Endothelial cell of umbilical vein (primary cell): ENCODE measurements at regions of chr5 and their contacts with region 1.

Region 1: DNA sequence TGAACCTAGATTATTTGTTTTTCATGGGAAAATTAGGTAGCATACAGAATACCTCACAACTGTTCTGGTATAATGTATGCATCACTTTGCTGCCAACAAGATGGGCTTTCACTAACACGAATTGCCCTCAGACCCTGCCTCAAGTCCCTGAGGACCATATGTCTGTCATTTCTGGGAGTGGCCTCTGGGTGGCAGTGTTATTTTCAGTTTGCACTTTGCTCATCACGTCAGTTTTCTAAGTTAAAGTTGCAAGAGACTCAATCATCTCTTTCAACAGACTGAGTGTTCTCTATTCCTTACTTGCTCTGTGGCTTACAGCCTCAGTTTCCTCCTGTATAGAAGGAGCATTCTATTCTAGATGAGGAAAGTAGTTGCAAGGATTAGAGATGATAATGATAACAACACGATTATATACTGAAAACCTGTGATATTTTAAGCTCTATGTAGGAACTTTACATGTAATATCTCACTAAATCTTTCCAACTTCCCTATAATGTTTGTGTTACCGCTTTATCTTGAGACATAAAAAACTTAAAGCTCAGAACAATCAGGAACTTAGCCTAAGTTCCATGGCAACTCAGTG is 55.7 kb downstream of the TSSK1B start:
- DNase-seq: peak; percentile 84
- H3K4me3 ChIP-seq: no peak overlapping the region
- H3K27ac ChIP-seq: no peak overlapping the region
- H3K4me1 ChIP-seq: peaks cover 28% of the 10 kb centered on the region
- H3K27me3 ChIP-seq: no peaks in the 10 kb centered on the region
- CTCF ChIP-seq: peak; percentile 67 to 76
- POLR2A ChIP-seq: no peak

Region 2: GRCh38 chr5:113336975-113337374 is 42.1 kb before region 1 on chr5:
- CTCF ChIA-PET with region 1: interaction called, 30 read pairs
- POLR2A ChIA-PET with region 1: interaction called, 5 read pairs
- dilution Hi-C with region 1: no loop called
- intact Hi-C with region 1: loop called (anchors 1 kb)
- DNase-seq: peak; percentile 78
- H3K4me3 ChIP-seq: no peak overlapping the region
- H3K27ac ChIP-seq: no peak overlapping the region
- H3K4me1 ChIP-seq: peaks cover 8% of the 10 kb centered on the region
- H3K27me3 ChIP-seq: no peaks in the 10 kb centered on the region
- CTCF ChIP-seq: peak; percentile 51 to 59
- POLR2A ChIP-seq: no peak

Region 3: DNA sequence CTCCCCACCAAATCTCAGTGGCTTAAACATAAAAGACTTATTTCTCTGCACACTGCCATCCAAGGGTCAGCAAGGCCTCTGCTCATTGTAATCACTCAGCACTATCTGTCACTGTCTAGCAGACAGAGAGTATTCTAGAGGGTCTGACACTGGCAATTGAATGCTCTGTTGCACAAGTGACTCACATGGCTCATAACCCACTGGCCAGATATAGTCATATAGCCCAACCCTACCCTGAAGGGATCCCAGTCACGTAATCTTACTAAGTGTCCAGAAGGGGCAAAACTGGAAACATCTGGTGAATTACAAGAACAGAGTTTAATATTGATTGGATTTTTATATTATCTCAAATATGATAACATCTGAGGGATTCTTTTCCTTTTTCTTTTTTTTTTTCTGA is 25.0 kb before region 1 on chr5:
- CTCF ChIA-PET with region 1: no interaction called
- POLR2A ChIA-PET with region 1: no interaction called
- dilution Hi-C with region 1: no loop called
- intact Hi-C with region 1: no loop called
- DNase-seq: no peak
- H3K4me3 ChIP-seq: no peak overlapping the region
- H3K27ac ChIP-seq: no peak overlapping the region
- H3K4me1 ChIP-seq: peaks cover 7% of the 10 kb centered on the region
- H3K27me3 ChIP-seq: no peaks in the 10 kb centered on the region
- CTCF ChIP-seq: no peak
- POLR2A ChIP-seq: no peak

Region 4: DNA sequence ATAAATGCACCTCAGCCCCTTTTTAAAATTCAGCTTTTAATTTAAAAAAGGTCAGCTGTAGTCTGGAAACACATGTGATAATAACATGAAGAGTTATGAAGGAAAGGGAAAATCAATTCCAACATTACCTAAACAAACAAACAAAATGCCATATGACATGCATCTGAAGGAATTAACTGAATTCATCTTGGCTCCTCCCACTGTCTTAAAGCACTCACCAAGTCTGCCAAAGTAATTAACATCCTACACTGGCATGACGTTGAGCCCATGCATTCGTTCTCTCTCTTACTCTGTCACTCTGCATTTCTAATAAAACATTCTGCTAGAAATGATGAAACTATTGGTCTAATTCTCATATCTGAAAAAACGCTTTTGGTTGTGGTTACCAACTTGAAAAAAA is 18.0 kb after region 1 on chr5:
- CTCF ChIA-PET with region 1: interaction called, 10 read pairs
- POLR2A ChIA-PET with region 1: no interaction called
- dilution Hi-C with region 1: no loop called
- intact Hi-C with region 1: no loop called
- DNase-seq: no peak
- H3K4me3 ChIP-seq: no peak overlapping the region
- H3K27ac ChIP-seq: no peak overlapping the region
- H3K4me1 ChIP-seq: no peaks in the 10 kb centered on the region
- H3K27me3 ChIP-seq: no peaks in the 10 kb centered on the region
- CTCF ChIP-seq: no peak
- POLR2A ChIP-seq: no peak

Region 5: DNA sequence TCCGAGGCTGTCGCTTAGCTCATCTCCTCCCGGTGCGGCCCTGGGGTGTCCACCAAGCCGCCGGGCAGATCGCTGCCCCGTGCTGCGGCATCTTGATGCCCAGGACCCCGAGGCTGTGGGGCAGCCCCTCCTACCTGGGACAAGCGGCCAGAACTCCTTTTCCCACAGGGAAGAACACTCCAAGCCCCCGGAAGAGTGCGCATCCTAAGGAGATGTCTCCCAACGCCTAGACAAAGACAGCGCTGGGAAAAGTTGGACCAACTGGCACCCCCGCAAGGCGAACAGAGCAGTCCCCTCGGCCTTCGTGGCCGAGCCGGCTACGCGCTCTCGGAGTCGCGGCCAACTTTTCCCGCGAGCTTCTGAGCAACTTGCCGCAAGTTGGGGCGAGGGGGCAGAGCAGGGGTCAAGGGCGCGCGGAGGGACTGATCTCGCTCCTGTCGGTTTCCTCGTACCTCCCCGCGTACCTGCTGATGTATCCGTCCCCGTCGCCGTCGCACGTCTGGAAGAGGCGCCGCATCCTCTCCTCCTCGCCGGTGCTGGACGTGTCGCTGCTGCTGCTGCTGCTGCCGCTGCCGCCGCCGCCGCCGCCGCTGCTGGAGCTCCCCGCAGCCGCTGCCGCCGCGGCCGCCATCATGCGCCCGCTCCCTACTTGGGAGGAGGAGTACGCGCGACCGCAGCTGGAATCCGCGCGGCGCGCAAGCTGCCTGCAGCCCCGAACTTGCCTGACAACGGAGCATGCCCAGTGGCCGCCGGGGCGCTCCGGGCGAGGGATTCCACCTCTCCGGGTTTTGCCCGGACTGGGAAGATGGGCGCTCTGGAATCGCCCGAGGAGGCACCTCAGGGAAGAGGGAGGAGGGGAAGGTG is 109.0 kb after region 1 on chr5 and contains the start of gene MCC:
- CTCF ChIA-PET with region 1: interaction called, 10 read pairs
- POLR2A ChIA-PET with region 1: no interaction called
- dilution Hi-C with region 1: no loop called
- intact Hi-C with region 1: no loop called
- DNase-seq: peak; percentile 73
- H3K4me3 ChIP-seq: peak within 1 kb of the TSS; percentile 10 to 69 (median 47)
- H3K27ac ChIP-seq: no peak within 1 kb of the TSS
- H3K4me1 ChIP-seq: peaks cover 18% of the 10 kb centered on the region
- H3K27me3 ChIP-seq: peaks cover 22 to 31% of the 10 kb centered on the region in 2 experiments
- CTCF ChIP-seq: no peak
- POLR2A ChIP-seq: no peak
- total RNA-seq, gene MCC: 23.0 and 27.5 TPM in 2 replicates

Region 6: DNA sequence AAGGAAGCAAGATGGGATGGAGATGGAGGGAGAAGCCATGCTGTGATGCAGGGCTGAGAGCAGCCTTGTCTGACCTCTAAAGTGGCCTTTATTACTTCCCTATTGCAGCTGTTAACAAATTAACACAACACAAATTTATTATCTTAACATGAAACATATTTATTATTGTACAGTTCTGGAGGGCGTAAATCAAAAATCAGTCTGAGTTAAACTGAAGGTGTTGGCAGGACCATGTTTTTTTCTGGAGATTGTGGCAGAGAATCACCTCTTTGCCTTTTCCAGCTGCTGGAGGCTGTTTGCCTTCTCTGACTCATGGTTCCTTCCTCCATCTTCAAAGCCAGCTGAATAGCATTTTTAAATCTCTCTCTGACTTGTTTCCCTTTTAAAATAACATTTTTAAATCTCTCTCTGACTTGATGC is 116.4 kb after region 1 on chr5:
- CTCF ChIA-PET with region 1: interaction called, 10 read pairs
- POLR2A ChIA-PET with region 1: no interaction called
- dilution Hi-C with region 1: no loop called
- intact Hi-C with region 1: loop called (anchors 5 kb)
- DNase-seq: peak; percentile 88
- H3K4me3 ChIP-seq: no peak overlapping the region
- H3K27ac ChIP-seq: no peak overlapping the region
- H3K4me1 ChIP-seq: peaks cover 9% of the 10 kb centered on the region
- H3K27me3 ChIP-seq: peaks cover 3 to 4% of the 10 kb centered on the region in 2 experiments
- CTCF ChIP-seq: no peak
- POLR2A ChIP-seq: no peak